ENCODE measurements at regions of chr2 and their contacts with region 1.

Region 1: DNA sequence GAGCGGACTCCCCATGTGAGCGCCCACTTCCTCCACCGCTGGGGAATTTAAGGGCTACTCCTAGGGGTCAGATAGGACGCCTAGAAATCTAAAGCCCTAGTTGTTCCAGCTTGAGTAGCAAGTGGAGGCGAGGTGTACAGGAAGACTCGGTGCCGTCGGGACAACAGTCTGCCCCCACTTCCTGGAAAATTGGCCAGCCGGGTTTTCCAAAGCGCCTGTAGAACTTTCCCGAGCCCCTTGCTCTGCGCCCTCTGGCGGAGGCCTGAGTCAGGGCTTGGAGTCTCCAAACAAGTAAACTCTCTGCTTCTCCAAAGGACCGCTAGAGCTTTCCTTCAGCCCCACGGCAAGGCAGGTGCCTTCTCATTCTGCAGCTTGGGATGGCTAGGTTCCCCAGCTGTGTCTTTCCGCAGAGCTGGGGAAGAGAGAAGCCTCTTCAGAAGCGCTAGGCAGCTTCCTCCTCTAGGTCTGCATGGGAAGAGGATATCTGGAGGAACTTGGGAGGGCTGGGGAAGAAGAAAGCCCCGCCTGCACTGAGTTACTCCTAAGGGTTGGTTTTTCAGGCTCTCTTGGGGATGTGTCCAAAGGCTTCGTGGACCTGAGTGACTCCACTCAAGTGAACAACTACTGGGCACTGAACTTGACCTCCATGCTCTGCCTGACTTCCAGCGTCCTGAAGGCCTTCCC is 688 bp downstream of the SPR start:
- DNase-seq: peak; percentile 68
- H3K4me3 ChIP-seq: peak overlapping the region; percentile 71
- H3K27ac ChIP-seq: peak overlapping the region; percentile 52
- H3K27me3 ChIP-seq: peaks cover 2% of the 10 kb centered on the region
- CTCF ChIP-seq: peak; percentile 99

Region 2: DNA sequence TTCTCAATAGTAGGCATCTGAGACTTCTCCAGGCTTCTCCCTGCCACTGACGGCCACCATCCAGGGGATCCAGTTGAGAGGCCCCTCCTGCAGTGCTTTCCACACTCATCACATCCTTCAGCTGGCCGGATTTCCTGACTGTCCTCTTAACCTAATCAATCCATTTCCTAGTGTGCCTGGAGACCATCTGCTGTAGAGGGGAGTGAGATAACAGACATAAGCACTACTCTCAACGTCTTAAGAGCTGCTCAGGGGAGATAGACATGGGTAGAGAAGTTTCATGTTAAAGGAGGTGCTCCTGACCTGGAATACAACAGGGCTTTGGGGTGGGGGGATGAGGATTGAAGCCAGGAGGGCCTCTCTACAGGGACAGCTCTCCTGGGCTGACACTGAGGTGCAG is 13.5 kb after region 1 on chr2:
- CTCF ChIA-PET with region 1: interaction called, 28 read pairs
- POLR2A ChIA-PET with region 1: no interaction called
- DNase-seq: no peak
- H3K4me3 ChIP-seq: no peak overlapping the region
- H3K27ac ChIP-seq: no peak overlapping the region
- H3K27me3 ChIP-seq: peaks cover 46% of the 10 kb centered on the region
- CTCF ChIP-seq: no peak

Region 3: DNA sequence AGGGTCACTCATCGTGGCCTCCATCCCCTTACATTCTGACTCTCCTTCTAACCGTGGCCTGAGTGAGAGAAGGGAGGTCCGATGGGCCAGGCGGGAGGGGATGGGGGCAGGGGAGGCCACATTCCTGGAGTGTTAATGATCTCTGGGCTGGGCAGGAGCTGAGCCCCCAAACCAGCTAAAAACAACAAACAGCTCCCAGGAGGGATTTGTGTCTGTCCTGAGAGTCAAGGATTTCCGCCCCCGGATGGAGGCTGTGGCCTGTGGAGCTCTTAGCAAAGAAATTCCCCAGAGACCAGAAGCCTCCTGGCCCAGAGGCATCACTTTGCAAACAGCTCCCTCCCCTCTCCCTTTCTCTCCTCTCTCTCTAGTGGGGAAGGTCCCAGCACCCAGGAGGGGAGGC is 52.9 kb after region 1 on chr2:
- CTCF ChIA-PET with region 1: interaction called, 17 read pairs
- POLR2A ChIA-PET with region 1: no interaction called
- DNase-seq: peak; percentile 47
- H3K4me3 ChIP-seq: no peak overlapping the region
- H3K27ac ChIP-seq: peak overlapping the region; percentile 57
- H3K27me3 ChIP-seq: no peaks in the 10 kb centered on the region
- CTCF ChIP-seq: no peak

Region 4: DNA sequence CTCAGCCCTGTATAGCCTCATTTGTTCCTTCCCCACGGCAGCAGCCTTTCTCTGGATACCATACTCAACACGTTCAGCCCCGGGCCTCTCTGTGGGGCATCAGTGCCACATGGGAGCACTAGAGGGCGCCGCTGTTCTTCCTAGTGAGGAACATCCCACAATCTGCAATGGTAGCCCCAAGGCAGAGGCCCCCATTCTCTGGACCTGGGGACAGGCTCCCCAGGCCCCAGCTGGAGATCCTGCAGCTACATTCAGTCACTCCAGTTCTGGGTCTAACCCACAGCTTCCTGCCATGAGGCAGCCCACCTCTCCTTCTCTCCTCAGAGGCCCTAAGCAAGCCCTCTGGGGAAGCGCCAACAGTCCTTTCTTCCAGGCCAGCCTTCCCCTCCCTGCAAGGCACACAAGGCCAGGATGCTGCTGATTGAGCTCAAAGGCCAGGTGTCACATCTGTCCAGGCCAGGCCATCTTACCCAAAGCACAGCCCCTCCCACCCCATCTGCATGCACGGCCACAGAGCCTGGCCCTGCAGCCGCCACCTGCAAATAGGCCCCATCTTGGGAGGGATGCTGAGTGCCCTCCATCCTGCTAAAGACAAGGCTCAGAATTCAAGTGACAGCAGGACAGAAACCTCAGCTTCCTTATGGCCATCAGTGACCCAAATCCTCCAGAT is 197.9 kb after region 1 on chr2:
- CTCF ChIA-PET with region 1: interaction called, 21 read pairs
- POLR2A ChIA-PET with region 1: no interaction called
- DNase-seq: peak; percentile 33
- H3K4me3 ChIP-seq: 0 out of 2 replicates have a peak overlapping the region, but pooled peaks have one; percentile 15
- H3K27ac ChIP-seq: no peak overlapping the region
- H3K27me3 ChIP-seq: no peaks in the 10 kb centered on the region
- CTCF ChIP-seq: peak; percentile 98

Region 5: DNA sequence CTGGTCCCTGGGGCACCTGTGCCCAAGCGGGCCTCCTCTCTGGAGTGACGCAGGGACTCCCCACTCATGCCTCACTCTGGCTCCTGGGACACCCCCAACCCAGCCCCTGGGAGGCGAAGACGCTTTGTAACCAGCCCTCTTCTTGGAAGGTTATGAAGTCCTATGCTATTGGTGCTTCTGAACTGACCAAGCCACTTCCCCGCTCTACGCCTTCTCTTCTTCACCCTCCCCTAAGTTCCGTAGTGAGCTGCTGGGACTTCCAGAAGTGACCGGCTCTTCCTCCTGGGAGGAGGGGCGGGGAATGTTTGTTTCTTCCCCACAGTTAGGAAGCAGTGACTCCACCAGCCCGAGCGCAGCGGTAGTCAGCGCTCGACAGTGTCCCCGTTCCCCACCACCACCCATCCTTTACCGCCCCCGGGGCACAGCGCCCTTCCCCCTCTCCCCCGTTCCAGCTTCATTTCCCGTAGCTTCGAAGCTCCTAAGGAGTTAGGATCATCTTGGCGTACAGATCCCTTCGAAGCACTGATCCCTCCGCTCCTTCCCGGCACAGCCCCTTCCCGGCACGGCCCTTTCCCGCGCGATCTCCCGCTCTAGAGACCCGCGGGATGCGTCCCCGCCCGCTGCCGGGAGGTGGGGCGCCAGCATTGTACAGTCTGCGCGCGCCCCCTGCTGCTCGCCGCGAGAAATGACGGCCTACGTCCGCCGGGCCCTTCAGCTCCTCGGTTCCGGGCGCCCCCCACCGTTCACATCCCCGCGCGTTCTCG is 289.2 kb after region 1 on chr2:
- CTCF ChIA-PET with region 1: interaction called, 118 read pairs
- POLR2A ChIA-PET with region 1: no interaction called
- DNase-seq: peak; percentile 55
- H3K4me3 ChIP-seq: peak overlapping the region; percentile 71
- H3K27ac ChIP-seq: no peak overlapping the region
- H3K27me3 ChIP-seq: peaks cover 17% of the 10 kb centered on the region
- CTCF ChIP-seq: peak; percentile 91